ENCODE measurements at regions of chr5 and their contacts with region 1.

Region 1: DNA sequence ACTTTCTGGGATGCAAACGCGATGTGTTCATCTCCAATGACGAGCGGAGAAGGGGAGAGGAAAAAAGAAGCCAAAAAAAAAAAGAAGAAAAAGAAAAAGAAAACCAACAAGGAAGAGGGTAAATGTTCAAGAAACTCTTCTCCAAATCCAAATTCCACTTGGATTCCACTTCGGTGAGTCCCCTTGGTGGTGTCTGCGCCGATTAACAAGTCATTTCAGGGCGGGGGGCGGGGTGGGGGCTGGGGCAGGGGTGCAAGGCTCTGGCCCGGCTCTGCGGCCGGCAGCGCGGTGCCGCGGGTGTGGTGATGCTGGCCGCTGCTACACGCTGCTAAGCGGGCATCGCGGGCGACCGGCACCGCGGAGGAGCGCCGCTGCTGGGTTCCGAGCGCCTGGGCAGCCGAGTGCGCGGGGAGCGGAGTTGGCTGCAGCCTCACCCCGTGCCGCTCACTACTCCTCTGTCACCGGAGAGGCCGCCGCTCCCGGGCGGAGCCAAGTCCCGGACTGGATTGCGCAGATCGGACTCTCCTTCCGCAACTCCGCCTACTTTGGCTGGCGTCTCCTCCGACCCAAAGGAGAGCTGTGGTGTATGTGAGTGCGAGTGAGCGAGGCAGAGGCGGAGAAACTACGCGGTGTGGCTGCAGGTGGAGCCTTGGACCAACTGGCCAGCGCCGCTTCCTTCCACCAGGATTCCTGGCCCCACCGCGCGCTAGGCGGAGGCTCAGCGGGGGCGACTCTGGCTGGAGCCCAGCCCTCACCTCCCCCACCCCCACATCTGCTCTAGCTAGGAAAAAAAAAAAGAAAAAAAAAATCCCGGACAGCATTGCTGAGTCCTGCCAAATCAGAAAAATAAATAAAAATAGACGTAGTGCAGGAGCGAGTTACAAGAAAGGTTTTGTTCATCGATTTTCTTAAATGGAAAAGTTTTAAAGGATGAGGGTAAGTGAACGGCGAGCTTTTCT is at the start of gene SEMA6A:
- DNase-seq: peak; percentile 81
- ATAC-seq: peak; percentile 68
- H3K4me3 ChIP-seq: peak within 1 kb of the TSS; percentile 85
- H3K27ac ChIP-seq: no peak within 1 kb of the TSS; the same call in 1 of the 2 replicates
- H3K4me1 ChIP-seq: peaks cover 14% of the 10 kb centered on the region
- H3K27me3 ChIP-seq: peaks cover 2 to 20% of the 10 kb centered on the region in 2 experiments
- CTCF ChIP-seq: peak in 1 of 3 experiments; percentile 14; a peak in 1 of 6 replicates
- EP300 ChIP-seq: peak in 1 of 2 experiments; percentile 51; a peak in 1 of 4 replicates
- POLR2A ChIP-seq: peak; percentile 67
- RAD21 ChIP-seq: no peak; the same call in 1 of the 2 replicates
- polyA plus RNA-seq, gene SEMA6A: 0.16 to 0.22 TPM

Region 2: DNA sequence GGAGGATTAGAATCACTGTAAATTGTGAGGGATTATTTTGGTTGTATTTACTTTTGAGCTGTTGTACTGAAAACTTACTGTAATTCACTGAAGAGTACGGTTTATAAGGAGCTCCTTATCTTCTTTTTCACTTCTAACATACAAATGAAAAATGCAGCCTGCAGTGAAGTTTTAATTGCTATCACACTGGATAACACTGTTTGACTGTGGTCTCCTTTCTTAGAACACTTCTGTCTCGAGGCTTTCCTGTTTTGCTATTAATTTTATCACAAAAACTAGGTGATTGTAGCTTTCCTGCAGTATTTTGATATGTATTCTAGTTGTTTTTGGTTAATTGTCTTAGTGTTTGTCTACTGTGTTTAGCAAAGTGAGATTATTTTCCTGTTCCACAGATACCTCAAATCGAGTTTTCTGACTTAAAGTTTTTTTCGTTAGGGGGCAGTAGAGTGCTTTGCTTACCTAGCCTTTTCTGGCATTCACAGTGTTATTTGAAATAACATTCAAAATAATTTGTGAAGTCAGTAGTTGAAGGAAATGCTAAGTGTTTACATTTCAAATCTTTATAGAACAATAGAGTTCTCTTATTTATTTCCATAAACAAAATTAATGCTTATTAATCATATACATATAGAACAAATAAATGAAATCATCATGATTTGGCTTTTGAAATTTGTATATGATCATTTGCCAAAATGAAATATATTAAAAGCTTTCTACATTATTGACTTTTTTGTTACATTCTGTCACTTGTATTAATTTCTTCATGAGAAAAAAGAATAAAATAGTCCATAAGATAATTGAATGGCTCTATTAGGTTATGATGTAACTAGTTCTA is 436.9 kb before region 1 on chr5:
- CTCF ChIA-PET with region 1: interaction called, 46 read pairs
- POLR2A ChIA-PET with region 1: interaction called, 3 read pairs
- RAD21 ChIA-PET with region 1: interaction called, 22 read pairs
- SMC1A ChIA-PET with region 1: interaction called, 30 read pairs
- in situ Hi-C with region 1: loop called (anchors 25 kb)
- intact Hi-C with region 1: loop called (anchors 1 kb)
- DNase-seq: peak; percentile 12
- ATAC-seq: peak; percentile 72
- H3K4me3 ChIP-seq: no peak overlapping the region
- H3K27ac ChIP-seq: no peak overlapping the region
- H3K4me1 ChIP-seq: peaks cover 3% of the 10 kb centered on the region; the same call in 1 of the 2 replicates
- H3K27me3 ChIP-seq: no peaks in the 10 kb centered on the region
- CTCF ChIP-seq: peak; percentile 55 to 70 (median 62); a peak in 5 of 6 replicates
- EP300 ChIP-seq: no peak
- POLR2A ChIP-seq: no peak
- RAD21 ChIP-seq: peak; percentile 95

Region 3: DNA sequence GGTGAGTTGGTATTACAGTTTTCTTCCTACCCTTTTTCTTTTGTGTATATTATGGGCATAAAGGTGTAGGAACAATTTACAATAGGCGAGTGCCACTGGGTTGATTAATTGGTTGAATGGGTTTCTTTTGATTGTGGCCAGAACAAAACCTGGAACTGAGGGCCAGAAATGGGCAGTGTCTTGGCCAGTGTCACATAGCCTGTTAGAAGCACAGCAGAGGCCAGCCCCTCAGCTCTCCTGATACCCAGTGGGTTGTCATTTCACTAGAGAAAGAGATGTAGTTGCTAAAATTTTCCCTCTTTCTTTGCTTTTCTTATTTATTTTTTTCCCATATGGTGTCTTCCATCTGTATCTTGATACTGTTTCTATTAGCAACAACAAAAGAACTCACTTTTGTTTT is 38.8 kb after region 1 on chr5:
- CTCF ChIA-PET with region 1: interaction called, 19 read pairs
- POLR2A ChIA-PET with region 1: interaction called, 18 read pairs
- RAD21 ChIA-PET with region 1: interaction called, 89 read pairs
- SMC1A ChIA-PET with region 1: interaction called, 74 read pairs
- in situ Hi-C with region 1: no loop called
- intact Hi-C with region 1: loop called (anchors 1 kb)
- DNase-seq: no peak
- ATAC-seq: peak; percentile 87
- H3K4me3 ChIP-seq: no peak overlapping the region
- H3K27ac ChIP-seq: peak overlapping the region; percentile 69; the same call in 1 of the 2 replicates
- H3K4me1 ChIP-seq: peaks cover 17% of the 10 kb centered on the region
- H3K27me3 ChIP-seq: no peaks in the 10 kb centered on the region
- CTCF ChIP-seq: no peak
- EP300 ChIP-seq: no peak
- POLR2A ChIP-seq: no peak
- RAD21 ChIP-seq: no peak

Region 4: DNA sequence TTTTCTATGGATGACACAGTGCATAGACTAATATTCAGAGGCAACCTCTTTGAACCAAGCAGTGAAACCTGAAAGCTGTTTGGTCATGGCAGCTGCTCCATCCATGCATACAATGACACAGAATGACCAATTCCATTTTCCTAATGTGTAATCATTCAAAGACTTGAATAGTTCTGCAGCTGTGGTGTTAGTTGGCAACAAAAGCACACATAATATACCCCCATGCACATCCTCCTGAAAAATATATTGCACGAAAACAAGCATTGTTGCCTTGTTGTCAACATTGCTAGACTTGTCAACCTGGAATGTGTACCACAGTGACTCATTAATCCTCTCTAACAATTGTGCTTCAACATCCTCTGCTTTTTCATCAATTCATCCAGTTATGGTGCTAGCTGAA is 71.0 kb after region 1 on chr5:
- CTCF ChIA-PET with region 1: interaction called, 42 read pairs
- POLR2A ChIA-PET with region 1: interaction called, 29 read pairs
- RAD21 ChIA-PET with region 1: interaction called, 112 read pairs
- SMC1A ChIA-PET with region 1: interaction called, 125 read pairs
- in situ Hi-C with region 1: loop called (anchors 5 kb)
- intact Hi-C with region 1: no loop called
- DNase-seq: no peak
- ATAC-seq: peak; percentile 92
- H3K4me3 ChIP-seq: no peak overlapping the region
- H3K27ac ChIP-seq: no peak overlapping the region
- H3K4me1 ChIP-seq: no peaks in the 10 kb centered on the region
- H3K27me3 ChIP-seq: no peaks in the 10 kb centered on the region
- CTCF ChIP-seq: no peak
- EP300 ChIP-seq: peak in 1 of 2 experiments; percentile 38; a peak in 1 of 4 replicates
- POLR2A ChIP-seq: no peak
- RAD21 ChIP-seq: no peak

Region 5: GRCh38 chr5:116681334-116682013 is 106.8 kb after region 1 on chr5:
- CTCF ChIA-PET with region 1: interaction called, 5 read pairs
- POLR2A ChIA-PET with region 1: interaction called, 5 read pairs
- RAD21 ChIA-PET with region 1: interaction called, 179 read pairs
- SMC1A ChIA-PET with region 1: interaction called, 64 read pairs
- in situ Hi-C with region 1: no loop called
- intact Hi-C with region 1: loop called (anchors 1 kb)
- DNase-seq: peak; percentile 86
- ATAC-seq: peak; percentile 98
- H3K4me3 ChIP-seq: 0 out of 2 replicates have a peak overlapping the region, but pooled peaks have one; percentile 14
- H3K27ac ChIP-seq: peak overlapping the region; percentile 84
- H3K4me1 ChIP-seq: peaks cover 20% of the 10 kb centered on the region
- H3K27me3 ChIP-seq: no peaks in the 10 kb centered on the region
- CTCF ChIP-seq: no peak
- EP300 ChIP-seq: peak; percentile 48 to 65; a peak in 2 of 4 replicates
- POLR2A ChIP-seq: 0 out of 2 replicates have a peak, but pooled peaks have one; percentile 33
- RAD21 ChIP-seq: no peak

Region 6: GRCh38 chr5:116885825-116886224 is 311.2 kb after region 1 on chr5:
- CTCF ChIA-PET with region 1: interaction called, 3 read pairs
- POLR2A ChIA-PET with region 1: interaction called, 10 read pairs
- RAD21 ChIA-PET with region 1: interaction called, 23 read pairs
- SMC1A ChIA-PET with region 1: interaction called, 27 read pairs
- in situ Hi-C with region 1: no loop called
- intact Hi-C with region 1: no loop called
- DNase-seq: no peak
- ATAC-seq: peak; percentile 72
- H3K4me3 ChIP-seq: no peak overlapping the region
- H3K27ac ChIP-seq: no peak overlapping the region
- H3K4me1 ChIP-seq: peaks cover 23% of the 10 kb centered on the region
- H3K27me3 ChIP-seq: no peaks in the 10 kb centered on the region
- CTCF ChIP-seq: no peak; a peak in 1 of 6 replicates
- EP300 ChIP-seq: peak in 1 of 2 experiments; percentile 49; a peak in 1 of 4 replicates
- POLR2A ChIP-seq: no peak
- RAD21 ChIP-seq: no peak

Measured in GM12878 (cell line).